ENCODE measurements at regions of chr4 and their contacts with region 1.

Region 1: GRCh38 chr4:43990963-43991362 is 457.6 kb downstream of the KCTD8 start:
- DNase-seq: no peak
- ATAC-seq: no peak
- H3K4me3 ChIP-seq: no peak overlapping the region
- H3K27ac ChIP-seq: no peak overlapping the region
- H3K4me1 ChIP-seq: no peaks in the 10 kb centered on the region
- H3K27me3 ChIP-seq: no peaks in the 10 kb centered on the region
- CTCF ChIP-seq: no peak
- POLR2A ChIP-seq: no peak

Region 2: GRCh38 chr4:43932448-43932847 is 58.5 kb before region 1 on chr4:
- in situ Hi-C with region 1: loop called in 1 of 4 experiments (anchors 10 kb)
- intact Hi-C with region 1: no loop called
- DNase-seq: no peak
- ATAC-seq: no peak
- H3K4me3 ChIP-seq: no peak overlapping the region
- H3K27ac ChIP-seq: no peak overlapping the region
- H3K4me1 ChIP-seq: no peaks in the 10 kb centered on the region
- H3K27me3 ChIP-seq: no peaks in the 10 kb centered on the region
- CTCF ChIP-seq: no peak
- POLR2A ChIP-seq: no peak

Region 3: DNA sequence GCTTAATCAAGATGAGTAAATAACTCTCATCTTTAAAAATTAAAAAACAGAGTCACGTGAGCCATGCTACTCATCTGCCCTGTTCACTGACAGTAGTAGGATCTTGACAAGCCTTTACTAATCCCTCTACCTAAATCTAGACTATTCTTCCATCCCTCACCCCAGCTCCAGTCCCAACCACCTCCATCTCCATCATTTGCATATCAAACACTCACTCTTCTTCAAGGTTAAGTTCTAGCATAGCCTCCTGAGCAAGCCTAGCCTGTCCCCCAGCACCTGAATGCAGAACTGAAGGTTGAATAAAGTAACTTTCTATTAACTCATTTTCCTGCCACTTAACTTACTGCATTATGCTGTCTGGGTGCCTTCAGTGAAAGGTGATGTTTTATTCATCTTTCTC is 588.0 kb after region 1 on chr4:
- in situ Hi-C with region 1: no loop called
- intact Hi-C with region 1: no loop called
- DNase-seq: no peak
- ATAC-seq: no peak
- H3K4me3 ChIP-seq: no peak overlapping the region
- H3K27ac ChIP-seq: no peak overlapping the region
- H3K4me1 ChIP-seq: no peaks in the 10 kb centered on the region
- H3K27me3 ChIP-seq: no peaks in the 10 kb centered on the region
- CTCF ChIP-seq: no peak
- POLR2A ChIP-seq: no peak

Measured in gastrocnemius medialis (tissue), 4 donors.